AG04450 (cell line): ENCODE measurements at regions of chr5 and their contacts with region 1.

Region 1: GRCh38 chr5:52989781-52990527 is 802 bp downstream of the ITGA2 start:
- DNase-seq: no peak
- H3K4me3 ChIP-seq: peak overlapping the region; percentile 86
- H3K27ac ChIP-seq: no peak overlapping the region
- H3K27me3 ChIP-seq: no peaks in the 10 kb centered on the region
- CTCF ChIP-seq: peak; percentile 37

Region 2: GRCh38 chr5:53123702-53124101 is 133.7 kb after region 1 on chr5:
- CTCF ChIA-PET with region 1: interaction called, 13 read pairs
- POLR2A ChIA-PET with region 1: no interaction called
- DNase-seq: no peak
- H3K4me3 ChIP-seq: no peak overlapping the region
- H3K27ac ChIP-seq: no peak overlapping the region
- H3K27me3 ChIP-seq: no peaks in the 10 kb centered on the region
- CTCF ChIP-seq: peak; percentile 35; the same call in 1 of the 2 replicates